PC-9 (cell line): ENCODE measurements at regions of chr2 and their contacts with region 1.

Region 1: GRCh38 chr2:68251187-68251854 is 1.0 kb downstream of the PPP3R1 start:
- DNase-seq: peak; percentile 34 to 84
- H3K4me3 ChIP-seq: peak overlapping the region; percentile 96
- H3K27ac ChIP-seq: peak overlapping the region; percentile 81
- H3K4me1 ChIP-seq: peaks cover 47% of the 10 kb centered on the region
- H3K27me3 ChIP-seq: no peaks in the 10 kb centered on the region
- CTCF ChIP-seq: peak; percentile 79

Region 2: DNA sequence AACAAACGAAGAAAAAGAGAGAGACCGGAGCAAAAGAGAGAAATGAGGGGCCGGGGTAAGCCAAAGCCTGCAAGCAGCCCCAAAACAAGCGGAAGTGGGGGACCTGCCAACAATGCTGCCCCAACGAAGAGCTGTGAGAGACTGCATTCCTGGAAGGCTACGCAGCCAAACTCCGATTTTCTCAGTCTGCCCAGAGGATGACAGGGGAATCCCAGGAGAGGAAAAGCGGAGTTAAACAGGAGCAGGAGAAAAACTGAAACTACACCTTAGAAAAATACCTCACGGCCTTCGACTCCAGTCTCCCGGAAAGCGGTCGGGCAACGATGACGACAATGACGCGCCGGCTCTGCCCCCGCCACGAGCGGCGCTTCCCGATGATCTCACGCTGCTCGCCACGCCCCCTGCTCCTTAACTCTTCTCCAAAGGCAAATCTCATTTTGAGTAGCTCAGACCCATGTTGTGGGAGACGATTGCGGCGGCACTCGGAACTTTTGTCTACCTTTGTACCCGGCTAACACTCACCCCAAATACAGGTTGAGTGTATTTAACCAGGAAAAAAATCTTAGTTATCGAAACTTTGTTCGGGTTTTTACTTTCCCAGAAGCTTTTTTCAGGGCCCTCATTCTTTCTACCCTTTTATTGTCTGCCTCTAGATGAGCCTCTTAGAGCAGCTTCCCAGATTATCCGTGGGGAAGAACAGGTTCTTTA is 188.5 kb before region 1 on chr2 and contains the start of gene C1D:
- CTCF ChIA-PET with region 1: no interaction called
- POLR2A ChIA-PET with region 1: interaction called, 8 read pairs
- intact Hi-C with region 1: loop called (anchors 10 kb)
- DNase-seq: peak; percentile 79 to 91
- H3K4me3 ChIP-seq: peak within 1 kb of the TSS; percentile 89
- H3K27ac ChIP-seq: peak within 1 kb of the TSS; percentile 83
- H3K4me1 ChIP-seq: peaks cover 10% of the 10 kb centered on the region
- H3K27me3 ChIP-seq: no peaks in the 10 kb centered on the region
- CTCF ChIP-seq: no peak
- total RNA-seq, gene C1D: 22.3 and 24.8 TPM in 2 replicates

Region 3: GRCh38 chr2:68121873-68122679 is 129.2 kb before region 1 on chr2:
- CTCF ChIA-PET with region 1: no interaction called
- POLR2A ChIA-PET with region 1: no interaction called
- intact Hi-C with region 1: loop called (anchors 10 kb)
- DNase-seq: peak; percentile 68 to 81
- H3K4me3 ChIP-seq: no peak overlapping the region
- H3K27ac ChIP-seq: no peak overlapping the region
- H3K4me1 ChIP-seq: no peaks in the 10 kb centered on the region
- H3K27me3 ChIP-seq: no peaks in the 10 kb centered on the region
- CTCF ChIP-seq: peak; percentile 99

Region 4: GRCh38 chr2:68157402-68158133 is 93.8 kb before region 1 on chr2 and contains the start of gene PNO1:
- CTCF ChIA-PET with region 1: no interaction called
- POLR2A ChIA-PET with region 1: interaction called, 8 read pairs
- intact Hi-C with region 1: loop called (anchors 1 kb)
- DNase-seq: peak; percentile 88 to 95
- H3K4me3 ChIP-seq: peak within 1 kb of the TSS; percentile 87
- H3K27ac ChIP-seq: peak within 1 kb of the TSS; percentile 69
- H3K4me1 ChIP-seq: peaks cover 14% of the 10 kb centered on the region
- H3K27me3 ChIP-seq: no peaks in the 10 kb centered on the region
- CTCF ChIP-seq: no peak
- total RNA-seq, gene PNO1: 11.2 and 17.8 TPM in 2 replicates

Region 5: DNA sequence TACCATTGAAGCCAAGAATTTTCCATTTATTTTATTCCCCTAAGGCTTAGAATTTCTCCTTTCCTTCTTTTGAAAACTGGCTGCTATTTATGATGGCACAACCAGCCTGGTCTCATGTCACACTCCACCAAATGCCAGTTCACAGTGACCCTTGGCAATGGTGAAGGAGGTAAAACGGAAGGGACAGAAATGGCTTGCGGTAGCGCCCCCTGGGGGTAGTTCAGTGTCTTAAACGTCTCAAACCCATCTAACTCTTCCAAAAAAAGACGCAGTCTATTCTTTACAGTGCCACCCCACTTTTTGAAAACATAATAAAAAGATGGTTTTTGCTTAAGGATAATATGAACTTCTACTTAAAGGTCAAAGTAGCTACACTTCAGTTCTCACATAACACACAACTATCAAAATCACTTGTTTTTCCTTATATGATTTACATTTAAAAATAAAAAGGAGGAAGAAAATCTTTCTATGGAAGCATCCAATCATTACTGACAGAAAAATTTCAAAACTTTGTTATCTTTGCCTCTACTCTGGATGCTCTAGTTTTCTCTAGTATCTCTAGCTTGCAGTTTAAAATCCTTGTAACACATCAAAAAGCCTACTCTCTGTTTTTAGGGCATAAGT is 65.7 kb before region 1 on chr2:
- CTCF ChIA-PET with region 1: no interaction called
- POLR2A ChIA-PET with region 1: no interaction called
- intact Hi-C with region 1: loop called (anchors 5 kb)
- DNase-seq: peak in 1 of 2 experiments; percentile 27
- H3K4me3 ChIP-seq: no peak overlapping the region
- H3K27ac ChIP-seq: no peak overlapping the region
- H3K4me1 ChIP-seq: no peaks in the 10 kb centered on the region
- H3K27me3 ChIP-seq: no peaks in the 10 kb centered on the region
- CTCF ChIP-seq: peak; percentile 84